Prostate gland (tissue), 2 donors: ENCODE measurements at regions of chr7 and their contacts with region 1.

Region 1: DNA sequence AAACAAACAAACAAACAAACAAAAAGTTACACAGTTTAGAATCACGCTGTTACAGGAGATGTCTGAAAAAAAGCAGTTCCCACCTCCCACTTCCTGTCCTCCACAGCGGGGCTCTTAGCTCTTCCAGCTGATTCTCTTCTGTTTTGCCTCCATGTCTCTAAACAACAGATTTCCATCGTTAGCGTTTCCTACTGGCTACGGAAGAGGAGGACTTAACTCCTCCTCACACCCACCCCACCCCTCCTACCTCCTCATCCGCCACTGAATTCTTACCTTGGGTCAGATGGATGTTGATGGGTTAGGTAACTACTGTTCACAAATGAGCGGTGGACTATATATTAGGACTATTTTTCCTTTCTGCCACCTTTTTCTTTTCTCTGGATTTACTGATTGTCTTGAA is 36.8 kb upstream of the NUB1 start:
- DNase-seq: no peak
- H3K4me3 ChIP-seq: no peak overlapping the region
- H3K27ac ChIP-seq: no peak overlapping the region
- H3K4me1 ChIP-seq: no peaks in the 10 kb centered on the region
- H3K27me3 ChIP-seq: no peaks in the 10 kb centered on the region
- CTCF ChIP-seq: no peak
- POLR2A ChIP-seq: no peak

Region 2: DNA sequence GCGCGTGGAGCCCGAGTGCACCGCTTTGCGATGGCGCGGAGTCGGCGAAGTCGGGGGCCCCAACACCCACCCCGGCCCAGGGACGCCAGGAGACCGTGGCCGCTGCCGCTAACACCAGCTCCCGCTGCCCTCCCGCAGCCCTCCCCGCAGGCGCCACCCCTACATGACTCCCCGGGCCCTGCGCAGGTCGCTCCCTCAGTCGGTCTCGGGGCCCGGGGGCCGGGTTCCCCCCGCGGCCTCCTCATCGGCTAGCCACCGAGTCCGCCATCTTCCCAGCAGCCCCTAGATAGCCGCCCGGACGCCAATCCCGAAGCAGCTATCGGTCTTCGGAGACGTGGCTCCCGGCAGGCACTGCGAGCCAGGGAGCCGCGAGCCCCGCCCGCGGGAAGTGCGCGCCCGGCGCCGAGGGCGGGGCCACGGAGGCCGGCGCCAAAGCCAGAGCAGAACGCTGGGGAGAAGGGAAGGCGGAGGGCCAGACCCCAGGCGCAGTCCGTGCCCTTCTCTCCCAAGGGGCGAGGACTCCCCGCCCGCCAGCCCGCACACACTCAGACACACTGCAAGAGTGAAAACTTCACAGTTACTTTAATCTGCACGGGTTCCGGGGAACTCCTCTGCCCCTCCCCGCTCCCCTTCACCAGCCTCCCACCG is 224.2 kb before region 1 on chr7 and contains the start of gene FASTK:
- intact Hi-C with region 1: no loop called
- DNase-seq: peak; percentile 91
- H3K4me3 ChIP-seq: peak within 1 kb of the TSS; percentile 83 to 87
- H3K27ac ChIP-seq: peak within 1 kb of the TSS; percentile 88 to 90
- H3K4me1 ChIP-seq: peaks cover 27% of the 10 kb centered on the region
- H3K27me3 ChIP-seq: no peaks in the 10 kb centered on the region
- CTCF ChIP-seq: peak in 2 of 4 experiments; percentile 5 to 9
- POLR2A ChIP-seq: peak; percentile 74
- total RNA-seq, gene FASTK: 107 to 122 TPM

Region 3: GRCh38 chr7:151123822-151124464 is 180.9 kb before region 1 on chr7:
- intact Hi-C with region 1: loop called (anchors 5 kb)
- DNase-seq: peak; percentile 91
- H3K4me3 ChIP-seq: no peak overlapping the region
- H3K27ac ChIP-seq: no peak overlapping the region
- H3K4me1 ChIP-seq: peaks cover 7% of the 10 kb centered on the region
- H3K27me3 ChIP-seq: no peaks in the 10 kb centered on the region
- CTCF ChIP-seq: peak; percentile 96 to 99 (median 98)
- POLR2A ChIP-seq: no peak

Region 4: GRCh38 chr7:151172273-151173141 is 132.3 kb before region 1 on chr7:
- intact Hi-C with region 1: loop called (anchors 5 kb)
- DNase-seq: peak; percentile 63
- H3K4me3 ChIP-seq: no peak overlapping the region
- H3K27ac ChIP-seq: no peak overlapping the region
- H3K4me1 ChIP-seq: no peaks in the 10 kb centered on the region
- H3K27me3 ChIP-seq: no peaks in the 10 kb centered on the region
- CTCF ChIP-seq: peak; percentile 100
- POLR2A ChIP-seq: peak; percentile 24

Region 5: GRCh38 chr7:151244196-151244840 is 60.5 kb before region 1 on chr7:
- intact Hi-C with region 1: loop called (anchors 2 kb)
- DNase-seq: no peak
- H3K4me3 ChIP-seq: no peak overlapping the region
- H3K27ac ChIP-seq: no peak overlapping the region
- H3K4me1 ChIP-seq: no peaks in the 10 kb centered on the region
- H3K27me3 ChIP-seq: no peaks in the 10 kb centered on the region
- CTCF ChIP-seq: peak; percentile 50 to 71 (median 62)
- POLR2A ChIP-seq: no peak

Region 6: DNA sequence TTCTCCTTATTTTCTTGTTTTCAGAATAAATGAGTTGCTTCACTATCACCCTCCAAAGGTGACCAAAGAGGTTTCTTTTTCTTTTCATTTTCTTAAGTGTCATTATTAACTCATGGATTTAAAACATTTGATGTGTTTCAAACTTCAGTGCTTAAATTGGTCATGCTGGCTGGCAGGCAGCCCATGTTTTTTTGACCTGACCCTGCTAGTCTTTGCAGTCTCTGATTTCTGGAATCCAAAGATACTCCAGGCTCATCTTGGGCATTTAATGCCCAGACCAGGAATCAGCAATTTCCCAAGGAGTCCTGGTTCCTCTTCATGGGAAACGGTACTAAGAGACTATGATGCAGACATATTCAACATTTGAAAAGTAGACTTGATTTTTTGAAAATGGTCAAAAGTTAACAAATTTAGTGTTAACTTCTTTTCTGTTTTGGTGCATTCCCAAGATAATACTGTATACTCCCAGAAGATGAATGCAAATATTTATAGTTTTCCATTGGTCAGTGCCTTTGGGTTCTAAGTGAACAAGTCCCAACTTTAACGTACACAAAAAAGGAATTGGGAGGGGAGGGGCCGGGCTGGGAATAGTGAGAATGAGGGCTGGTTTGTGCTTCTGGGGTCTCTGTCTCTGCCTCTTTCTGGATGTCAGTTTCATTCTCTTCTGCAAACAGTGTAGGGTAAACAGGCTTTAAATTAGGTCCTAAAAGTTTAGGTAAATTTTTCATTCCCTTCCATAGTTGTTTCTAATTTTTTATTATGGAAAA is 56.5 kb after region 1 on chr7:
- intact Hi-C with region 1: no loop called
- DNase-seq: no peak
- H3K4me3 ChIP-seq: no peak overlapping the region
- H3K27ac ChIP-seq: no peak overlapping the region
- H3K4me1 ChIP-seq: no peaks in the 10 kb centered on the region
- H3K27me3 ChIP-seq: no peaks in the 10 kb centered on the region
- CTCF ChIP-seq: no peak
- POLR2A ChIP-seq: no peak

Region 7: GRCh38 chr7:151539088-151539671 is 234.3 kb after region 1 on chr7:
- intact Hi-C with region 1: no loop called
- DNase-seq: no peak
- H3K4me3 ChIP-seq: no peak overlapping the region
- H3K27ac ChIP-seq: peak overlapping the region; percentile 30 to 68
- H3K4me1 ChIP-seq: peaks cover 6% of the 10 kb centered on the region
- H3K27me3 ChIP-seq: no peaks in the 10 kb centered on the region
- CTCF ChIP-seq: no peak
- POLR2A ChIP-seq: no peak